ENCODE measurements at regions of chr2 and their contacts with region 1.

Region 1: DNA sequence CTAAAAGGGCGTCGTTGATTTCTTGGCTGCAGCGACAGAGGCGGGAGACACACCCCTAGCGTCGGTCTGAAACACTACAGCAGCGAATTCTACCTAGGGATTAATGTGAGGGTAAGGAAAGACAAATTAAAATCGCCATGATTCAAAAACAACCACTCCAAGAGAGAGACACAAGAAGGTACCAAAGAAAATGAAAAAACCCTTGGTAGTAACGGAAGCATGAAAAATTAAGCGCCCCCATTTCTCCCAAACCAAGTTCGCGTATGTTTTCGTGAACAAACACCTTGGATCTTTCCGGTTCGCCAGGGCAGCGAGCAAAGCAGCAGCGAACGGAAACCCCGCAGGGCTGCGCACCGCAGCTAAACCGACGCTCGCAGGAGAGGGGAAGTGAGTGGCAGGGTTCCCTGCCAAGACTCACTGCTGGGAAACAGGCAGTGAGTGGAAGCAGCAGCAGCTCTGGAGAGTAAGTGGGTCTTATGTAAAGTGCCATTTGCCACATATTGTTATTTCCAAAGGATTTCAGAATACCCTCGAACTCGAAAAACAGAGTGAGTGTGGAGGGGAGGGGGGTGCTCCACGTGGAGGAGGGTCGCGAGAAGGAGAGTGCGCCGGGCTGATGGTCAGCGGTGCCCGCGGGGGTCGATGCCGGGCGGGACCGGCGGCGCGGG is 1.0 kb downstream of the PPP3R1 start:
- DNase-seq: peak; percentile 75
- H3K4me3 Mint-ChIP-seq: peak overlapping the region; percentile 92
- H3K27ac Mint-ChIP-seq: peak overlapping the region; percentile 97
- H3K4me1 Mint-ChIP-seq: peaks cover 50% of the 10 kb centered on the region
- H3K27me3 Mint-ChIP-seq: peaks cover 6% of the 10 kb centered on the region

Region 2: GRCh38 chr2:68121873-68122679 is 129.2 kb before region 1 on chr2:
- intact Hi-C with region 1: loop called (anchors 1 kb)
- DNase-seq: peak; percentile 50
- H3K4me3 Mint-ChIP-seq: no peak overlapping the region
- H3K27ac Mint-ChIP-seq: no peak overlapping the region
- H3K4me1 Mint-ChIP-seq: peaks cover 5% of the 10 kb centered on the region
- H3K27me3 Mint-ChIP-seq: peaks cover under 1% of the 10 kb centered on the region

Region 3: DNA sequence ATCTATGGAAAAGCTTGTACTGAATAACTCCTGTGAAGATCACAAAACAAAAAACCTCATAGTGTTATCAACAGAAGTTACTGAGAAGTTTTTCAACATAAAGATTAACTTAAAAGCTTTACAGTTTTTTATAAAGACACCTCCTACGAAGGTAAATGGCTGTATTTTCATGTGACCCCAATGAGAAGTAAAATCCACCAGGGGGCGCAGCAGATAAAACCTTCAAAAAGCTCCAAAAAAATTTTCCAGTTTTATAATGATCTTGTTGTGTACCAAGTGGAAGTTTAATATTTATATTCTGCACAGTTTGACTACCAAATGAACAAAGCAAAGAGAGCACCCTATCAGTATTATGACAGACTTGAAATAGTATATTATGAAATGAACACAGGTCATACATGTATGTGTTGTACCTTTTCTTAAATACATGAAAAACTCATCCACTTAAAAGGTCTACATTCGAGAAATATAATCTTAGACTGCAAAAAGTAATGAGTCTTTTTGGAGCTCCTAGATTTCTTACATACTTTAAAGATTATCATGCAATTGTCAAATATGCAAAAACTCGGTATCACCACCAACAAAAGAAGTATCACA is 55.1 kb before region 1 on chr2:
- intact Hi-C with region 1: loop called (anchors 1 kb)
- DNase-seq: no peak
- H3K4me3 Mint-ChIP-seq: no peak overlapping the region
- H3K27ac Mint-ChIP-seq: no peak overlapping the region
- H3K4me1 Mint-ChIP-seq: peaks cover 45% of the 10 kb centered on the region
- H3K27me3 Mint-ChIP-seq: no peaks in the 10 kb centered on the region

Region 4: GRCh38 chr2:68238955-68239822 is 12.1 kb before region 1 on chr2:
- intact Hi-C with region 1: loop called (anchors 1 kb)
- DNase-seq: no peak
- H3K4me3 Mint-ChIP-seq: no peak overlapping the region
- H3K27ac Mint-ChIP-seq: no peak overlapping the region
- H3K4me1 Mint-ChIP-seq: peaks cover 56% of the 10 kb centered on the region
- H3K27me3 Mint-ChIP-seq: no peaks in the 10 kb centered on the region

Region 5: GRCh38 chr2:68385220-68385906 is 134.0 kb after region 1 on chr2:
- intact Hi-C with region 1: loop called (anchors 1 kb)
- DNase-seq: no peak
- H3K4me3 Mint-ChIP-seq: peak overlapping the region; percentile 42
- H3K27ac Mint-ChIP-seq: peak overlapping the region; percentile 91
- H3K4me1 Mint-ChIP-seq: peaks cover 49% of the 10 kb centered on the region
- H3K27me3 Mint-ChIP-seq: peaks cover 2% of the 10 kb centered on the region

Region 6: DNA sequence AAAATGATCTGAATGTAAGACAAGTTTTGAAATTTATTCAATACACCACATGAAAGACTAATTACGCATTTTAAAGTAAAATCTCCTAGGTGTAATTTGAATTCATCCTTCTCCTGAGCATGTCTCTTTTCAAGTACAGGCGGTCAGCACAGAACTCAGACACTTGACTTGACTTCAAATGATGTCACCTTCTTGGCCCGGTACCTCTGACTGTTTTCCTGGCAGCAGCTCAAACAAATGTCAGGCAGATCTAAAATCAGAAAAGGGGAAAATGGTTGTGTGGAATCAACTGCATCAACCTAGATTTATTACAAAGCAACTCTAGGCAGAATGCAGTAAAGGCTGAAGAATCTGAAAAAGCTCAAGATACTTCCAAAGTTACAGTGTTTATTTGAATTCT is 380.7 kb after region 1 on chr2:
- intact Hi-C with region 1: no loop called
- DNase-seq: no peak
- H3K4me3 Mint-ChIP-seq: no peak overlapping the region
- H3K27ac Mint-ChIP-seq: no peak overlapping the region
- H3K4me1 Mint-ChIP-seq: no peaks in the 10 kb centered on the region
- H3K27me3 Mint-ChIP-seq: peaks cover 33% of the 10 kb centered on the region

Region 7: GRCh38 chr2:68653538-68653982 is 402.2 kb after region 1 on chr2:
- intact Hi-C with region 1: loop called (anchors 10 kb)
- DNase-seq: peak; percentile 51
- H3K4me3 Mint-ChIP-seq: peak overlapping the region; percentile 8
- H3K27ac Mint-ChIP-seq: peak overlapping the region; percentile 64
- H3K4me1 Mint-ChIP-seq: peaks cover 47% of the 10 kb centered on the region
- H3K27me3 Mint-ChIP-seq: peaks cover 26% of the 10 kb centered on the region

Region 8: GRCh38 chr2:70190418-70191243 is 1939.3 kb after region 1 on chr2 and contains the start of gene C2orf42:
- intact Hi-C with region 1: loop called (anchors 2 kb)
- DNase-seq: peak; percentile 95
- H3K4me3 Mint-ChIP-seq: peak within 1 kb of the TSS; percentile 95
- H3K27ac Mint-ChIP-seq: peak within 1 kb of the TSS; percentile 99
- H3K4me1 Mint-ChIP-seq: peaks cover 23% of the 10 kb centered on the region
- H3K27me3 Mint-ChIP-seq: peaks cover 3% of the 10 kb centered on the region
- total RNA-seq, gene C2orf42: 21.6 and 24.1 TPM in 2 replicates